CD8-positive, alpha-beta T cell (primary cell): ENCODE measurements at regions of chr7 and their contacts with region 1.

Region 1: DNA sequence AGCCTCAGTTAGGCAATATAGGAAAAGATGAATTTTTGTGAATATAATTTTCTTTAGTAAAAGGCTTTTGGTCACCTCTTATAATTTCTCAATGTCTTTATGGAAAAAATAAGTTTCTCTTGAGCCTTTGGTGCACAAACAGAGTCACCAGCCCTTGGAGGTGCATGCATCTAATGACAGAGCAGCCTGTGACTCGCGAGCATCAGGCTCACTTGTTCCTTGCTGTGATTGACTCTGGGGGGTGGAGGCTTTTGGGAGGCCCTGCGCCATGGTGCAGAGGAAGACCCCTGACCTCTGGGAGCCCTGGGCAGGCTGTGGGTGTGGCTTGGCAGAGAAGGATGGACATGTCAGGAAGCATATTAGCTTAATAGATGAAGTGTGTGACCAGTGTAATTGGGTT is 60.2 kb downstream of the FIGNL1 start:
- DNase-seq: no peak
- ATAC-seq: no peak
- H3K4me3 ChIP-seq: no peak overlapping the region
- H3K4me3 Mint-ChIP-seq: peak overlapping the region; percentile 15
- H3K27ac ChIP-seq: peak overlapping the region in 1 of 2 experiments; percentile 34
- H3K27ac Mint-ChIP-seq: peak overlapping the region; percentile 94
- H3K4me1 ChIP-seq: peaks cover 62% of the 10 kb centered on the region
- H3K4me1 Mint-ChIP-seq: peaks cover 80% of the 10 kb centered on the region
- H3K27me3 ChIP-seq: no peaks in the 10 kb centered on the region
- H3K27me3 Mint-ChIP-seq: no peaks in the 10 kb centered on the region
- CTCF ChIP-seq: no peak

Region 2: GRCh38 chr7:50409856-50410745 is 20.1 kb after region 1 on chr7:
- CTCF ChIA-PET with region 1: no interaction called
- POLR2A ChIA-PET with region 1: interaction called, 3 read pairs
- intact Hi-C with region 1: loop called in 1 of 2 experiments (anchors 2 kb)
- DNase-seq: peak in 1 of 9 experiments; percentile 42
- ATAC-seq: peak; percentile 53
- H3K4me3 ChIP-seq: peak overlapping the region in 1 of 2 experiments; percentile 16
- H3K4me3 Mint-ChIP-seq: peak overlapping the region; percentile 65
- H3K27ac ChIP-seq: no peak overlapping the region
- H3K27ac Mint-ChIP-seq: peak overlapping the region; percentile 83
- H3K4me1 ChIP-seq: peaks cover 30% of the 10 kb centered on the region
- H3K4me1 Mint-ChIP-seq: peaks cover 65% of the 10 kb centered on the region
- H3K27me3 ChIP-seq: no peaks in the 10 kb centered on the region
- H3K27me3 Mint-ChIP-seq: no peaks in the 10 kb centered on the region
- CTCF ChIP-seq: no peak

Region 3: DNA sequence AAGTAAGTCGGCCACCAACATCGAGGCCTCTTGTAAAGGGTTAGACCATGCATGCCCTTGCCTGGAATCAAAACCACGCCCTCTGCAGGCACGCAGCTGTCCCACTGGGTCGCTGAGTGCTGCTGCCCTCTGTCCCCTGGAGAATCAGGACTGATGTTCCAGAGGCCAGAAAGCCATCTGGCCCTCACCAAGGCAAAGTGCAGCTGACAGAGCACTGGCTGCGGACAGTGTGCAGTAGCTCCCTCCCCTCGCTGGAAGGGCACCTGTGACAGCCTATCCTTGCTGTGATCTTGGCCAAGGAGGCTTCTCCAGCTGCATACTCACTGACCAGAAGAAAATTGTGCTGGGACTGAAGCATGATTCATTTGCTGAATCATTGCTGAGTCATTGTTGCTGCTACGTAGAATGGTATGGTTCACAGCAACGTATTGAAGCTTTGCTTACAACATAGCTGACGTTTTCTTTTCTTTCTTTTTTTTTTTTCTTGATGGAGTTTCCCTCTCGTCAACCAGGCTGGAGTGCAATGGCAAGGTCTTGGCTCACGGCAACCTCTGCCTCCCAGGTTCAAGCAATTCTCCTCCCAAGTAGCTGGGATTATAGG is 144.8 kb after region 1 on chr7:
- CTCF ChIA-PET with region 1: no interaction called
- POLR2A ChIA-PET with region 1: no interaction called
- intact Hi-C with region 1: no loop called
- DNase-seq: peak in 1 of 9 experiments; percentile 12
- ATAC-seq: no peak
- H3K4me3 ChIP-seq: no peak overlapping the region
- H3K4me3 Mint-ChIP-seq: no peak overlapping the region
- H3K27ac ChIP-seq: no peak overlapping the region
- H3K27ac Mint-ChIP-seq: no peak overlapping the region
- H3K4me1 ChIP-seq: no peaks in the 10 kb centered on the region
- H3K4me1 Mint-ChIP-seq: no peaks in the 10 kb centered on the region
- H3K27me3 ChIP-seq: no peaks in the 10 kb centered on the region
- H3K27me3 Mint-ChIP-seq: peaks cover 11% of the 10 kb centered on the region
- CTCF ChIP-seq: no peak

Region 4: GRCh38 chr7:50676748-50677637 is 287.0 kb after region 1 on chr7:
- CTCF ChIA-PET with region 1: no interaction called
- POLR2A ChIA-PET with region 1: no interaction called
- intact Hi-C with region 1: no loop called
- DNase-seq: no peak
- ATAC-seq: no peak
- H3K4me3 ChIP-seq: no peak overlapping the region
- H3K4me3 Mint-ChIP-seq: no peak overlapping the region
- H3K27ac ChIP-seq: no peak overlapping the region
- H3K27ac Mint-ChIP-seq: no peak overlapping the region
- H3K4me1 ChIP-seq: no peaks in the 10 kb centered on the region
- H3K4me1 Mint-ChIP-seq: peaks cover 2% of the 10 kb centered on the region
- H3K27me3 ChIP-seq: no peaks in the 10 kb centered on the region
- H3K27me3 Mint-ChIP-seq: no peaks in the 10 kb centered on the region
- CTCF ChIP-seq: no peak